GM12878 (cell line): ENCODE measurements at regions of chr13 and their contacts with region 1.

Region 1: GRCh38 chr13:75372517-75372916 is 109.5 kb downstream of the TBC1D4 start:
- DNase-seq: no peak
- ATAC-seq: peak; percentile 87
- H3K4me3 ChIP-seq: no peak overlapping the region
- H3K27ac ChIP-seq: no peak overlapping the region
- H3K4me1 ChIP-seq: no peaks in the 10 kb centered on the region; the same call in 1 of the 2 replicates
- H3K27me3 ChIP-seq: no peaks in the 10 kb centered on the region
- CTCF ChIP-seq: peak; percentile 59 to 64 (median 61); a peak in 5 of 6 replicates
- EP300 ChIP-seq: no peak
- POLR2A ChIP-seq: no peak
- RAD21 ChIP-seq: peak; percentile 78

Region 2: DNA sequence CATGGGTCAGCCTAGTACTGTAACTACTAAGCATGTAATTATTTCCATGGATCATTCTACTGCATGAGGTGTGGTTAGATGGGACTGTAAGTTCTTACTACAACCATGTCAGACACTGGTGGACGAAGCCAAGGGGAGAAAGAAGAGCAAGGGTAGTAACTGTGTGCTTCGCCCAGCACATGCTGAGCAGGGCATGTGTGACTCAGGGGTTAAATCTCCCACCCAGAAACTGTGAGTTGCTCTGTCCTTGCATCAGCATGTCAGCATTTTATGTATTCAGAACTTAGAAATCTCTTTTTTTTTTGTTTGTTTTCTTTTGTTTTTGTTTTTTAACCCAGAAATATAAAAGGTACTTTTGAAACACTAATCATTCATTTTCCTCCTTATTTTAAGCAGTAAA is 801.7 kb before region 1 on chr13:
- CTCF ChIA-PET with region 1: no interaction called
- POLR2A ChIA-PET with region 1: no interaction called
- RAD21 ChIA-PET with region 1: no interaction called
- SMC1A ChIA-PET with region 1: no interaction called
- in situ Hi-C with region 1: no loop called
- intact Hi-C with region 1: no loop called
- DNase-seq: no peak
- ATAC-seq: no peak
- H3K4me3 ChIP-seq: no peak overlapping the region
- H3K27ac ChIP-seq: no peak overlapping the region
- H3K4me1 ChIP-seq: no peaks in the 10 kb centered on the region
- H3K27me3 ChIP-seq: peaks cover 1 to 2% of the 10 kb centered on the region in 2 experiments; a peak in 2 of 4 replicates
- CTCF ChIP-seq: no peak
- EP300 ChIP-seq: no peak
- POLR2A ChIP-seq: no peak
- RAD21 ChIP-seq: no peak

Region 3: GRCh38 chr13:74907788-74908187 is 464.7 kb before region 1 on chr13:
- CTCF ChIA-PET with region 1: no interaction called
- POLR2A ChIA-PET with region 1: no interaction called
- RAD21 ChIA-PET with region 1: no interaction called
- SMC1A ChIA-PET with region 1: no interaction called
- in situ Hi-C with region 1: no loop called
- intact Hi-C with region 1: no loop called
- DNase-seq: no peak
- ATAC-seq: no peak
- H3K4me3 ChIP-seq: no peak overlapping the region
- H3K27ac ChIP-seq: no peak overlapping the region
- H3K4me1 ChIP-seq: no peaks in the 10 kb centered on the region
- H3K27me3 ChIP-seq: no peaks in the 10 kb centered on the region
- CTCF ChIP-seq: no peak
- EP300 ChIP-seq: no peak
- POLR2A ChIP-seq: no peak
- RAD21 ChIP-seq: no peak

Region 4: DNA sequence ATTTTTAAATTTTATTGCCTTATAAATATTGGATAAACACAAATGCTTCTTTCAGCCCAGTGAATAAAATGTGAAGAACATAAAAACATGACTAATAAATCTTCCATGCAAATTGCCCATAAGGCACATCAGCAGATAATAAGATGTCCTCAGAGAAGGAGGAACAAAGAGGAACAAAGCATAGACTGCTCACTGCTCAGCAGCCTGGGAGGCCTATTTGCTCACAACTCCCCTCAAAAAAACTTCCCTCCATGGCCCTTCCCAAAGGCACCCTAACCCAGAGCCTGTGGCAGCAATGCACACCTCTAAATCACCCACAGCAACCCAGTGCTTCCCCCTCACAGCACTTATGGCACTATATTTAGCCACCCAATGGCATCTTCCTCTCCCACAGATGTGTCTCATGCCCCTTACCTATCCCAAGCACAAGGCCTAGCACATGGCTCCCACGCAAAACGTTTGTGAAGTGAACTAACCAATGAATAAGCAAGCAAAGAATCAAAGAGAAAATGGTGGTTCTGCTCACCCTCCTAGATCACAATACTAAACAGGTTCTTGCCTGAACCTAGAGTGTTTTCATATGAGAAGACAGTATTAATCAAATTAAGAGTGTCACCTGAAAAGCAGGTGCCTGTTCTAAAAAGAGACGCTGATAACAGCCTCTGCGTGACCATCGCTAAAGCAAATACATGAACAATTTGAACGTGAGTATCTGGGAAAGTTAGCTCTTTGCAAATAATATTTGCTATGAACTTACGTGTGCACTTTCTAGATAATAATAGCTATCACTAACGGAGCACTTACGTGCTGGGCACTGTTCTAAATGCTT is 12.6 kb after region 1 on chr13:
- CTCF ChIA-PET with region 1: interaction called, 10 read pairs
- POLR2A ChIA-PET with region 1: no interaction called
- RAD21 ChIA-PET with region 1: no interaction called
- SMC1A ChIA-PET with region 1: interaction called, 26 read pairs
- in situ Hi-C with region 1: no loop called
- intact Hi-C with region 1: no loop called
- DNase-seq: no peak
- ATAC-seq: peak; percentile 61
- H3K4me3 ChIP-seq: no peak overlapping the region
- H3K27ac ChIP-seq: no peak overlapping the region; the same call in 1 of the 2 replicates
- H3K4me1 ChIP-seq: peaks cover 4% of the 10 kb centered on the region; the same call in 1 of the 2 replicates
- H3K27me3 ChIP-seq: no peaks in the 10 kb centered on the region
- CTCF ChIP-seq: no peak
- EP300 ChIP-seq: no peak
- POLR2A ChIP-seq: no peak
- RAD21 ChIP-seq: no peak

Region 5: DNA sequence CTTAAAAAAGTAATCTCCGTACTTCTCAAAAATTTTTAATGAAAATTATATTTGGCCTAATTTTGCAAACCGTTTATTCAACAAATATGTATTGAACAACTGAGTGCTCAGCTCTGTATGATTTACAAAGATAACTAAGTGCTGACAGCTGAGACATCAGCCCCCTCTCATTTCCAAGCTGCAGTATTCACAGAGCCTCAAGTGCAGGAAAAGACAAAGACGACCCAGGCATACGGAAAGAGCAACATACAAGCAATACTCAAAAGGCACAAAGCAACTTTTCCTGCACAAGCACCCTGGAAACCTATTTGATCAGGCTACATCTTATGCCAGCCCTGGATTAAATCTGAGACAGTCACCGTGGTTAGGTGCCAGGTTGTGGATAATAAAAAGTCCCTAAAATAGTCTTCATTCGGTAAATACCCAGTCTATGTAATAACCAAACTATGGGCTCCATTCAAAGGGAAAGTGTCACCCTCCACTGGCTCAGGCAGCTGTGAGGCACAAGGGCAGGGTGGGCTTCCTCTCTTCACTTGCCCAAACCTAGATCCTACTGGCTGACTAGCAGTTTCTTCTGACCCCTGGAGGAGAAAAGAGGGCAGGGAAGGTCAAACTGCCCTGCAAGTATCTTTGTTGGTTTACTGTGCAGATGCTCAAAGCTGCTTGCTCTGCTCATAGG is 43.9 kb after region 1 on chr13:
- CTCF ChIA-PET with region 1: interaction called, 41 read pairs
- POLR2A ChIA-PET with region 1: no interaction called
- RAD21 ChIA-PET with region 1: interaction called, 8 read pairs
- SMC1A ChIA-PET with region 1: interaction called, 10 read pairs
- in situ Hi-C with region 1: no loop called
- intact Hi-C with region 1: no loop called
- DNase-seq: peak; percentile 36
- ATAC-seq: peak; percentile 90
- H3K4me3 ChIP-seq: no peak overlapping the region
- H3K27ac ChIP-seq: peak overlapping the region; percentile 4; the same call in 1 of the 2 replicates
- H3K4me1 ChIP-seq: peaks cover 17% of the 10 kb centered on the region
- H3K27me3 ChIP-seq: no peaks in the 10 kb centered on the region
- CTCF ChIP-seq: peak in 2 of 3 experiments; percentile 18 to 22; a peak in 2 of 6 replicates
- EP300 ChIP-seq: no peak
- POLR2A ChIP-seq: no peak
- RAD21 ChIP-seq: peak; percentile 62

Region 6: GRCh38 chr13:75474956-75475355 is 102.4 kb after region 1 on chr13:
- CTCF ChIA-PET with region 1: interaction called, 37 read pairs
- POLR2A ChIA-PET with region 1: no interaction called
- RAD21 ChIA-PET with region 1: interaction called, 12 read pairs
- SMC1A ChIA-PET with region 1: interaction called, 10 read pairs
- in situ Hi-C with region 1: no loop called
- intact Hi-C with region 1: no loop called
- DNase-seq: no peak
- ATAC-seq: no peak
- H3K4me3 ChIP-seq: no peak overlapping the region
- H3K27ac ChIP-seq: no peak overlapping the region
- H3K4me1 ChIP-seq: peaks cover 12% of the 10 kb centered on the region
- H3K27me3 ChIP-seq: no peaks in the 10 kb centered on the region
- CTCF ChIP-seq: no peak
- EP300 ChIP-seq: no peak
- POLR2A ChIP-seq: no peak
- RAD21 ChIP-seq: no peak

Region 7: DNA sequence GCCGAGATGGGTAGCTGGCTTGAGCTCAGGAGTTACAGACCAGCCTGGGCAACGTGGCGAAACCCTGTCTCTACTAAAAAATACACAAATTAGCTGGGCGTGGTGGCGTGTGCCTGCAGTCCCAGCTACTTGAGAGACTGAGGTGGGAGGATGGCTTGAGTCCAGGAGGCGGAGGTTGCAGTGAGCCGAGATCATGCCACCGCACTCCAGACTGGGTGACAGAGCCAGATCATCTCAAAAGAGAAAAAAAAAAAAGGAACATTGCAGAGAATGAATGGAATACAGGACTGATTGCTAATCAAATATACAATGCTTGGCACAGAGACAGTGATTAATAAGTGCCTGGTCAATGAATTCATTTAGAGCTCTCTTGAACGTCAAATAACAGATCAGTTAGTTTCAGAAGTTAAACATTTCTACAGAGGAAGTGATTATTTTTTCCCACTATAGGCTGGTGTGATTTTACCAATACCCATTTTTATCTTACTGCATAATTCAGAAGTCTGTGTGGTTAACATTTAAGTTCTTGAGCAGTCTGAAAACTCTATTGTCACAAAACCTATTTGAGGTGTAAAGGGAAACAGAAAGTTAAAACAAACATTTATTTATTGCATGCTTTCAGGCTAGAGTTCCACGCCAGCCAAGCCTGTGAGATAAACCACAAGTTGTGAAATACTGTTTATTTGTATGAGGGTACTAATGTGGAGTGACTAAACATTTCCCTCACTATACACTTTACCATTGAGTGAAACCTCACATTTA is 117.2 kb after region 1 on chr13:
- CTCF ChIA-PET with region 1: interaction called, 26 read pairs
- POLR2A ChIA-PET with region 1: no interaction called
- RAD21 ChIA-PET with region 1: interaction called, 46 read pairs
- SMC1A ChIA-PET with region 1: interaction called, 75 read pairs
- in situ Hi-C with region 1: loop called (anchors 5 kb)
- intact Hi-C with region 1: no loop called
- DNase-seq: peak; percentile 76
- ATAC-seq: peak; percentile 85
- H3K4me3 ChIP-seq: no peak overlapping the region
- H3K27ac ChIP-seq: peak overlapping the region; percentile 17; the same call in 1 of the 2 replicates
- H3K4me1 ChIP-seq: peaks cover 5% of the 10 kb centered on the region
- H3K27me3 ChIP-seq: no peaks in the 10 kb centered on the region
- CTCF ChIP-seq: no peak
- EP300 ChIP-seq: peak in 1 of 2 experiments; percentile 73; a peak in 3 of 4 replicates
- POLR2A ChIP-seq: no peak
- RAD21 ChIP-seq: no peak

Region 8: GRCh38 chr13:75566658-75567057 is 194.1 kb after region 1 on chr13:
- CTCF ChIA-PET with region 1: interaction called, 10 read pairs
- POLR2A ChIA-PET with region 1: no interaction called
- RAD21 ChIA-PET with region 1: no interaction called
- SMC1A ChIA-PET with region 1: interaction called, 3 read pairs
- in situ Hi-C with region 1: no loop called
- intact Hi-C with region 1: no loop called
- DNase-seq: no peak
- ATAC-seq: no peak
- H3K4me3 ChIP-seq: no peak overlapping the region
- H3K27ac ChIP-seq: no peak overlapping the region
- H3K4me1 ChIP-seq: no peaks in the 10 kb centered on the region
- H3K27me3 ChIP-seq: no peaks in the 10 kb centered on the region
- CTCF ChIP-seq: peak; percentile 15 to 47 (median 21); a peak in 4 of 6 replicates
- EP300 ChIP-seq: no peak
- POLR2A ChIP-seq: no peak
- RAD21 ChIP-seq: peak; percentile 48; the same call in 1 of the 2 replicates